Activated CD4-positive, alpha-beta T cell treated with anti-CD3 and anti-CD28 coated beads for 36 hours (primary cell): ENCODE measurements at regions of chr10 and their contacts with region 1.

Region 1: DNA sequence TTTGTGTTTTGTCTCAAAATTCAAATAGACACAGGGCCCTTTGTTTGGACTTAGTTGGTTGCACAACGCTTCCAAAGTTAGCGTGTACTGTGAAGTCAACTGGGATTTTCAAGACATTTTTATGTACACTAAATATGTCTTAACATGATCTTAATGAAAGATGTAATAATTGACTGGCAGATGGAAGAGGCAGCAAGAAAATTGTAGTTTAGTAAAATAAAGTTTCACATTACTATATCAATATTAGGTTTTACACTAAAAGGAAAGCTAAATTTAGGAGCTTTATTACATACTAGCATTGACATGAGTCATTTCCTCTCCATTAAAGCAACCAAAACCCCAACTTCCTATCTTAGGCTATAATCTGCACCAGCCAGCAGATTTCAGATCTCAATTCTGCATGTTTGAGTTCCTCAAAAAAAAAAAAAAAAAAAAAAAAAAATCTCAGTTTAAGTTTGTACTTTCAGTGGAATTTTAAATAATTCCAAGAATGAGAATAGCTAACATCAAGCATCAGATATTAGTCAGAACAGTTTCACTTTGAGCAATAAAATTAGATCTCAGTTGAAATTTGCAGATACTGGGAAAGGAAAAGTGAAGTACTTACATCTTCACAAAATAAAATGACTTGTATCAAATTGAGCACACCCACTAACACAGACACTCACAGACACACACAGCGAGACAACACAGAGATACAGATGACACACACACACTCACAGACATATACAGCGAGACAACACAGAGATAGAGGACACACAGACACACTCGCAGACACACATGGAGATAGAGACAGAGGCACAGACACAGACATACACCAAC is 346.6 kb upstream of the KLF6 start:
- DNase-seq: peak; percentile 44
- ATAC-seq: peak; percentile 85
- H3K4me3 Mint-ChIP-seq: no peak overlapping the region
- H3K27ac Mint-ChIP-seq: no peak overlapping the region
- H3K4me1 Mint-ChIP-seq: peaks cover 41% of the 10 kb centered on the region
- H3K27me3 Mint-ChIP-seq: peaks cover 11% of the 10 kb centered on the region

Region 2: DNA sequence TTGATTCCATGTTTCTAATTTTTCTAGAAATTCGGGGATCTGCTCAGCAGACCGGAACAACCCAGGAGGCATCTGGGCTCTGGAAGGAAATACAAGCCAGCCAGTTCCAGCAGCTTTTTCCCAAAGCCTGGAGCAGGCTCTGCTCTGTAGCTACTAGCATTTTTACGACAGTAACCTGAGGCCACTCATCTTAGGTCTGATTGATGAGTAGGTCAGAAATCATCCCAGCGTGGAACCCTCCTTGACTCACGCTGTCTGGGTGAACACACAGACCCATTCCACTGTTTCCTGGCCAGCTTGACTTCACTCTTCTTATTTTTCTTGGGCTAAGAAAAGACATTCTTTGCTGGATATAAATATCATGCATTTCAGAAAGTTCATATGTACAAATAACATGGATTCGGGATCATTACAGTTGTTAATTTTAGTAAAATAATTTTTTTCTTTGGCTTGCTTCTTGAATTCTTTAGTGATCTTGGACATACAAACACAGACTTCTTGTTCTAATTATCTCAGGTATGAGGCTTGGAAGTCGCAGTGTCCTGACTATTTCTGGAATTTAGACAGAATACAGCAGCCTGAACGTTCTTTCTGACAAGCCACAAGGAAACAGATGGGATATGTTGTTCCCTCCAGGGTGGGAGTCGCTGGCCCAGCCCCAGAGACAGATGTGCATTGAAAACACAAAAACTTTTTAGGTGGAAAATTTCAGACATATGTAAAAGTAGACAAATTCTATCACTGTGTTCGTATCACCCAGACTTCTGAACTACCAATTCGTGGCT is 904.5 kb before region 1 on chr10:
- CTCF ChIA-PET with region 1: no interaction called
- POLR2A ChIA-PET with region 1: no interaction called
- intact Hi-C with region 1: loop called in 1 of 2 experiments (anchors 5 kb)
- DNase-seq: no peak
- ATAC-seq: peak; percentile 18
- H3K4me3 Mint-ChIP-seq: no peak overlapping the region
- H3K27ac Mint-ChIP-seq: no peak overlapping the region
- H3K4me1 Mint-ChIP-seq: peaks cover 20% of the 10 kb centered on the region
- H3K27me3 Mint-ChIP-seq: peaks cover 8% of the 10 kb centered on the region

Region 3: GRCh38 chr10:3811291-3811870 is 320.2 kb before region 1 on chr10:
- CTCF ChIA-PET with region 1: no interaction called
- POLR2A ChIA-PET with region 1: interaction called, 4 read pairs
- intact Hi-C with region 1: loop called (anchors 1 to 2 kb)
- DNase-seq: peak; percentile 78
- ATAC-seq: peak; percentile 62
- H3K4me3 Mint-ChIP-seq: peak overlapping the region; percentile 42
- H3K27ac Mint-ChIP-seq: no peak overlapping the region
- H3K4me1 Mint-ChIP-seq: peaks cover 80% of the 10 kb centered on the region
- H3K27me3 Mint-ChIP-seq: no peaks in the 10 kb centered on the region

Region 4: GRCh38 chr10:3935141-3935540 is 196.5 kb before region 1 on chr10:
- CTCF ChIA-PET with region 1: no interaction called
- POLR2A ChIA-PET with region 1: no interaction called
- intact Hi-C with region 1: loop called (anchors 2 to 5 kb)
- DNase-seq: peak; percentile 89
- ATAC-seq: peak; percentile 98
- H3K4me3 Mint-ChIP-seq: peak overlapping the region; percentile 37
- H3K27ac Mint-ChIP-seq: peak overlapping the region; percentile 91
- H3K4me1 Mint-ChIP-seq: peaks cover 50% of the 10 kb centered on the region
- H3K27me3 Mint-ChIP-seq: no peaks in the 10 kb centered on the region

Region 5: DNA sequence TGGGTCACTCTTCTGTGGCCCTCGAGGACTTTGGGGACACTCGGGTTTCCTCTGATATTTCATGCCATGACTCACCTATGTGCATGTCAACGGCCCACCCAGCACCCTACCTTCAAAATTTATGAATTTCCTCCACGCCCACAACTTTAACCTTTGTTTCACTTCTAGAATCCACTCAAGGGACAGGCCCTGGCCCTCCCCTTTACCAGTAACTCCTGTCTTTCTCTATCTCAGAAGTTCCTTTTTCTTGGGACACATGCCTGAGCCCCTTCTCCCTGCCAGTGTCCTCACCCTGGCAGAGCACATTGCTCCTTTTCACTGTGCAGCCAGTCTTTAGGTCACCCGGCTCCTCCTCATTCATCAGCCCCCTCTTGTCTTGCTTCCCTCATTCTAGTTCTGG is 64.1 kb before region 1 on chr10:
- CTCF ChIA-PET with region 1: no interaction called
- POLR2A ChIA-PET with region 1: no interaction called
- intact Hi-C with region 1: loop called in 1 of 2 experiments (anchors 2 kb)
- DNase-seq: peak; percentile 46
- ATAC-seq: peak; percentile 66
- H3K4me3 Mint-ChIP-seq: no peak overlapping the region
- H3K27ac Mint-ChIP-seq: no peak overlapping the region
- H3K4me1 Mint-ChIP-seq: peaks cover 8% of the 10 kb centered on the region
- H3K27me3 Mint-ChIP-seq: no peaks in the 10 kb centered on the region

Region 6: DNA sequence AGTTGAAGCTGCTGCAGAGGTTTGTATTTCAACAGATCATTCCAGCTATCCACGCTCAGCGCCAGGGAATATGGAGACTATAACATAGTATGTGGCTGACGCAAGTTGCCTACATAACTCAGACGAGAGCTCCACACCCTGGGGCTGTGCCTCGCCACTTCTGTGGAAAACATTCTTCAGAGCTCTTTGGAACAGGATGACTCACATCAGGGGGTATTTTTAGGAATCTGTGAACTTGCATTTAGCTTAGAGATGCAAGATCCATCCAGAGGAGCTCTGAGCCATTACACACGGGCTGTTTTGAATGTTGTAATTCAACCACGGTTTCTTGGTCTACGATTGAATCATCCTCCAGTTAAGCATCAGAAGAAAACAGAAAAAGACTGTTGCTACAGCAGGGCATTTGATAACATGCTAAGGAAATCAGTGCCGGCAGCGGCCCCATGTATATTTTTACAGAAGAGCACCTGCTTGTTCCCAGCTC is 212.9 kb after region 1 on chr10:
- CTCF ChIA-PET with region 1: no interaction called
- POLR2A ChIA-PET with region 1: no interaction called
- intact Hi-C with region 1: loop called (anchors 1 to 10 kb)
- DNase-seq: peak; percentile 64
- ATAC-seq: peak; percentile 95
- H3K4me3 Mint-ChIP-seq: no peak overlapping the region
- H3K27ac Mint-ChIP-seq: no peak overlapping the region
- H3K4me1 Mint-ChIP-seq: peaks cover 24% of the 10 kb centered on the region
- H3K27me3 Mint-ChIP-seq: no peaks in the 10 kb centered on the region

Region 7: GRCh38 chr10:5813287-5814109 is 1681.9 kb after region 1 on chr10 and contains the start of gene GDI2:
- CTCF ChIA-PET with region 1: no interaction called
- POLR2A ChIA-PET with region 1: no interaction called
- intact Hi-C with region 1: no loop called
- DNase-seq: peak; percentile 98
- ATAC-seq: peak; percentile 94
- H3K4me3 Mint-ChIP-seq: peak within 1 kb of the TSS; percentile 92
- H3K27ac Mint-ChIP-seq: peak within 1 kb of the TSS; percentile 98
- H3K4me1 Mint-ChIP-seq: peaks cover 60% of the 10 kb centered on the region
- H3K27me3 Mint-ChIP-seq: no peaks in the 10 kb centered on the region
- total RNA-seq, gene GDI2: 276 to 290 TPM